Gastrocnemius medialis (tissue), 4 donors: ENCODE measurements at regions of chr9 and their contacts with region 1.

Region 1: GRCh38 chr9:17531642-17532254 is 47.1 kb upstream of the SH3GL2 start:
- DNase-seq: no peak
- ATAC-seq: no peak
- H3K4me3 ChIP-seq: no peak overlapping the region
- H3K27ac ChIP-seq: no peak overlapping the region
- H3K4me1 ChIP-seq: no peaks in the 10 kb centered on the region
- H3K27me3 ChIP-seq: no peaks in the 10 kb centered on the region
- CTCF ChIP-seq: peak in 2 of 5 experiments; percentile 16 to 19
- POLR2A ChIP-seq: no peak

Region 2: DNA sequence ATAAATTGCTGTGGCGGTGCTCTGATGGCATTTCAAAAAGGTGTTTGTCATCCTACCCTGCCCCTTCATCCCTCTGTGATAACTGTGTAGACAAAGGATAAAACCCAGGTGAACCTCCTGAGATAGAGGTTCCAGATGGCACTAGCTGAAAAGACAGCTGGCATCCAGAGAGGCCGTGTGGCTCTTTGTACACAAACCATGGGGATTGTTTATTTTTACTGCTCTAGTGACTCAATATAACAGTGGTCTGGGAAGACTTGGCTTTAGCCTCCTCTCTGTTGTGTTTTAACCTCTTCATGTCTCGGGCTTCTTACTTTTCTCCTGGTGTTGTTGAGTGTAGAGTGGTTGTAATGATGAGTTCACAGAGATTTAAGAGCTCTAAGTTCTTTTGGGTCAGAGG is 95.9 kb after region 1 on chr9:
- in situ Hi-C with region 1: no loop called
- intact Hi-C with region 1: no loop called
- DNase-seq: no peak
- ATAC-seq: no peak
- H3K4me3 ChIP-seq: no peak overlapping the region
- H3K27ac ChIP-seq: no peak overlapping the region
- H3K4me1 ChIP-seq: no peaks in the 10 kb centered on the region
- H3K27me3 ChIP-seq: no peaks in the 10 kb centered on the region
- CTCF ChIP-seq: no peak
- POLR2A ChIP-seq: no peak

Region 3: GRCh38 chr9:17802249-17802857 is 270.6 kb after region 1 on chr9:
- in situ Hi-C with region 1: loop called in 1 of 4 experiments (anchors 10 kb)
- intact Hi-C with region 1: no loop called
- DNase-seq: no peak
- ATAC-seq: no peak
- H3K4me3 ChIP-seq: no peak overlapping the region
- H3K27ac ChIP-seq: no peak overlapping the region
- H3K4me1 ChIP-seq: no peaks in the 10 kb centered on the region
- H3K27me3 ChIP-seq: no peaks in the 10 kb centered on the region
- CTCF ChIP-seq: no peak
- POLR2A ChIP-seq: no peak

Region 4: DNA sequence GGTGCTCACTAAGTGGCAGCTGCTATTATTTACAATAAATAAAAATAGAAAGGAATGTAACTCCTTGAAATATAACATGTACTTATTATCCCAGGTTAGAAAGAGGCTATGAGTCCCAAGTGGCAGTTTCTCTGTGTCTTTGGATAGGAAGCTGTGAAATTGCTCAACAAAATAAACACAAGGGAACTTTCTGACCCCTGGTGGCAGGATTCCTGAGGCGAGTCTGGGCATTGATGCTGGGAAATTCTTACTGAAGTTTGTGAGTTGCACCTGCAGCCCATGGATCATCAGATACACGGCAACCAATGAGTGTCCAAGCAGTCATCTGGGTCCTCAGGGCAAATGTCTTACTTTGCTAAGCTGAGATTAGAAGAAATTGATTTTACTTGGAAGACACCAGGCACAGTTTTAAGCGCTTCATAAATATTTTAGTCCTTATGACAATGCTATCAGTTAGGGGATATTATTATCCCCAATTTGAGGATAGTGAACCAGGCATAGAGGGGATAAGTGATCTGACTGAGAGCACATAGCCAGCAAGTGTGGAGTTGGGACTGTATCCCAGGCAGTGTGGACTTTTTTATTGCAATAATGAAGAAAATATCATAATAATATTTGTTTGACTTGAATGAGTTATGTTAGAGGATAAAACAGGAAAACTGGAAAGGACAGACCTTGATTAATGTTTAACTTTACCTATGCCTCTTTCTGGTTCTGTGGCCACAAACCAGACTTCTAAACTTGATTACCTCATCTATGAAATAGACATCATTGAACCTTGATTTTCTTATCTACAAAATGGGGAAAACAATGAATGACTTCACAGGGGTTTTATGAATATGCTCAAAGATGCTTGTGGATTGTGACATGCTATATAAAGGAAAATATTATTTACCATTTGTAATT is 676.7 kb after region 1 on chr9:
- in situ Hi-C with region 1: loop called in 1 of 4 experiments (anchors 25 kb)
- intact Hi-C with region 1: no loop called
- DNase-seq: no peak
- ATAC-seq: no peak
- H3K4me3 ChIP-seq: no peak overlapping the region
- H3K27ac ChIP-seq: no peak overlapping the region
- H3K4me1 ChIP-seq: no peaks in the 10 kb centered on the region
- H3K27me3 ChIP-seq: no peaks in the 10 kb centered on the region
- CTCF ChIP-seq: no peak
- POLR2A ChIP-seq: no peak